ENCODE measurements at regions of chrX and their contacts with region 1.

Region 1: DNA sequence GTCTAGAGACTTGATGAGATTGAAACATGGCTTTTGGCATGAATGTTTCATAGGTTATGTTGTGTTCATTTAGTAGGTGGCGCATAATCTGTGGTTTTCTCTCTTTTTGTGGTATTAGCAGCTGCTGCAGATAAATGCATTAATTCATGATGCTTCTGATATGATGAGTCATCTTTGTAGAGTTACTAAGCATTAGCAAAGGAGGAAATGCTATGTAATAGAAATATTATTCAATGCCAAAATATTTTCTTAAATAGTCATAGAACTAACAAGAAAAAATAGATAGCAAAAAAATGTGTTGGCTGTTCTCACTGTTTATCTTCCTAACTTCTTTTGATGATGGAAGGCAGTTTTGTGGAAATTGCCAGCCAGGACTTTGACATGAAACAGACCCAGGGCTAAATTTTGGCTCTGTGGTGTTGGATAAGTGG is 3.6 kb downstream of the ZXDB start:
- DNase-seq: peak in 3 of 14 experiments; percentile 26 to 46 (median 34)
- ATAC-seq: no peak
- H3K4me3 ChIP-seq: no peak overlapping the region
- H3K4me3 Mint-ChIP-seq: peak overlapping the region; percentile 81
- H3K27ac ChIP-seq: no peak overlapping the region
- H3K27ac Mint-ChIP-seq: peak overlapping the region; percentile 66
- H3K4me1 ChIP-seq: peaks cover 18% of the 10 kb centered on the region
- H3K4me1 Mint-ChIP-seq: peaks cover 49% of the 10 kb centered on the region
- H3K27me3 ChIP-seq: no peaks in the 10 kb centered on the region
- H3K27me3 Mint-ChIP-seq: no peaks in the 10 kb centered on the region
- CTCF ChIP-seq: no peak

Region 2: GRCh38 chrX:56563231-56564161 is 1031.9 kb before region 1 on chrX and contains the start of gene UBQLN2:
- CTCF ChIA-PET with region 1: no interaction called
- POLR2A ChIA-PET with region 1: no interaction called
- intact Hi-C with region 1: loop called in 1 of 2 experiments (anchors 10 kb)
- DNase-seq: peak; percentile 61 to 89 (median 74)
- ATAC-seq: peak; percentile 76
- H3K4me3 ChIP-seq: peak within 1 kb of the TSS; percentile 80
- H3K4me3 Mint-ChIP-seq: peak within 1 kb of the TSS; percentile 90
- H3K27ac ChIP-seq: peak within 1 kb of the TSS; percentile 80 to 89
- H3K27ac Mint-ChIP-seq: peak within 1 kb of the TSS; percentile 96
- H3K4me1 ChIP-seq: no peaks in the 10 kb centered on the region
- H3K4me1 Mint-ChIP-seq: peaks cover 39% of the 10 kb centered on the region
- H3K27me3 ChIP-seq: no peaks in the 10 kb centered on the region
- H3K27me3 Mint-ChIP-seq: no peaks in the 10 kb centered on the region
- CTCF ChIP-seq: no peak
- total RNA-seq, gene UBQLN2: 48.7 to 49.1 TPM

Region 3: GRCh38 chrX:56995271-56995994 is 600.0 kb before region 1 on chrX and contains the start of gene SPIN3:
- CTCF ChIA-PET with region 1: no interaction called
- POLR2A ChIA-PET with region 1: no interaction called
- intact Hi-C with region 1: loop called in 1 of 2 experiments (anchors 10 kb)
- DNase-seq: peak; percentile 20 to 70 (median 53)
- ATAC-seq: peak; percentile 84
- H3K4me3 ChIP-seq: peak within 1 kb of the TSS; percentile 73
- H3K4me3 Mint-ChIP-seq: peak within 1 kb of the TSS; percentile 98
- H3K27ac ChIP-seq: peak within 1 kb of the TSS; percentile 25 to 55
- H3K27ac Mint-ChIP-seq: peak within 1 kb of the TSS; percentile 96
- H3K4me1 ChIP-seq: peaks cover 8% of the 10 kb centered on the region
- H3K4me1 Mint-ChIP-seq: peaks cover 50% of the 10 kb centered on the region
- H3K27me3 ChIP-seq: no peaks in the 10 kb centered on the region
- H3K27me3 Mint-ChIP-seq: no peaks in the 10 kb centered on the region
- CTCF ChIP-seq: no peak
- total RNA-seq, gene SPIN3: 6.8 to 8.8 TPM

Region 4: GRCh38 chrX:57528670-57529255 is 66.6 kb before region 1 on chrX:
- CTCF ChIA-PET with region 1: no interaction called
- POLR2A ChIA-PET with region 1: no interaction called
- intact Hi-C with region 1: no loop called
- DNase-seq: peak in 6 of 14 experiments; percentile 0 to 29 (median 12)
- ATAC-seq: no peak
- H3K4me3 ChIP-seq: no peak overlapping the region
- H3K4me3 Mint-ChIP-seq: no peak overlapping the region
- H3K27ac ChIP-seq: no peak overlapping the region
- H3K27ac Mint-ChIP-seq: no peak overlapping the region
- H3K4me1 ChIP-seq: no peaks in the 10 kb centered on the region
- H3K4me1 Mint-ChIP-seq: no peaks in the 10 kb centered on the region
- H3K27me3 ChIP-seq: no peaks in the 10 kb centered on the region
- H3K27me3 Mint-ChIP-seq: no peaks in the 10 kb centered on the region
- CTCF ChIP-seq: no peak

Region 5: GRCh38 chrX:57906790-57907189 is 311.4 kb after region 1 on chrX:
- CTCF ChIA-PET with region 1: no interaction called
- POLR2A ChIA-PET with region 1: no interaction called
- intact Hi-C with region 1: loop called in 1 of 2 experiments (anchors 2 kb)
- DNase-seq: no peak
- ATAC-seq: no peak
- H3K4me3 ChIP-seq: no peak overlapping the region
- H3K4me3 Mint-ChIP-seq: peak overlapping the region; percentile 83
- H3K27ac ChIP-seq: no peak overlapping the region
- H3K27ac Mint-ChIP-seq: peak overlapping the region; percentile 16
- H3K4me1 ChIP-seq: peaks cover 23% of the 10 kb centered on the region
- H3K4me1 Mint-ChIP-seq: peaks cover 55% of the 10 kb centered on the region
- H3K27me3 ChIP-seq: no peaks in the 10 kb centered on the region
- H3K27me3 Mint-ChIP-seq: no peaks in the 10 kb centered on the region
- CTCF ChIP-seq: no peak

Measured in CD4-positive, alpha-beta T cell (primary cell).